HepG2 (cell line): ENCODE measurements at regions of chr10 and their contacts with region 1.

Region 1: GRCh38 chr10:75358835-75359431 is 42.6 kb downstream of the ZNF503 start:
- DNase-seq: no peak
- ATAC-seq: no peak
- H3K4me3 ChIP-seq: no peak overlapping the region
- H3K27ac ChIP-seq: no peak overlapping the region
- H3K4me1 ChIP-seq: no peaks in the 10 kb centered on the region
- H3K27me3 ChIP-seq: 0 out of 5 replicates have a peak, but pooled peaks cover 0 to 8% of the 10 kb centered on the region in 2 experiments
- CTCF ChIP-seq: no peak
- EP300 ChIP-seq: no peak
- POLR2A ChIP-seq: no peak
- RAD21 ChIP-seq: no peak

Region 2: GRCh38 chr10:76769582-76769981 is 1410.6 kb after region 1 on chr10:
- CTCF ChIA-PET with region 1: no interaction called
- POLR2A ChIA-PET with region 1: no interaction called
- in situ Hi-C with region 1: no loop called
- intact Hi-C with region 1: loop called (anchors 10 kb)
- DNase-seq: no peak
- ATAC-seq: no peak
- H3K4me3 ChIP-seq: no peak overlapping the region
- H3K27ac ChIP-seq: no peak overlapping the region
- H3K4me1 ChIP-seq: no peaks in the 10 kb centered on the region
- H3K27me3 ChIP-seq: peaks cover 0 to 3% of the 10 kb centered on the region in 2 experiments; a peak in 1 of 5 replicates
- CTCF ChIP-seq: no peak
- EP300 ChIP-seq: no peak
- POLR2A ChIP-seq: no peak
- RAD21 ChIP-seq: no peak